HepG2 (cell line): ENCODE measurements at regions of chr16 and their contacts with region 1.

Region 1: GRCh38 chr16:22161999-22162655 is at the start of gene SDR42E2:
- DNase-seq: no peak
- ATAC-seq: peak; percentile 12; the same call in 2 of the 3 replicates
- H3K4me3 ChIP-seq: peak within 1 kb of the TSS in 1 of 3 experiments; percentile 37; a peak in 1 of 6 replicates
- H3K27ac ChIP-seq: no peak within 1 kb of the TSS
- H3K4me1 ChIP-seq: peaks cover 31% of the 10 kb centered on the region
- H3K27me3 ChIP-seq: peaks cover 6 to 24% of the 10 kb centered on the region in 2 experiments; a peak in 4 of 5 replicates
- CTCF ChIP-seq: no peak
- EP300 ChIP-seq: no peak
- POLR2A ChIP-seq: no peak
- RAD21 ChIP-seq: no peak
- total RNA-seq, gene SDR42E2: 0.11 TPM in 1 of 2 replicates, not detected in the other

Region 2: GRCh38 chr16:22109258-22109898 is 52.7 kb before region 1 on chr16:
- CTCF ChIA-PET with region 1: no interaction called
- POLR2A ChIA-PET with region 1: no interaction called
- in situ Hi-C with region 1: loop called (anchors 5 kb)
- intact Hi-C with region 1: no loop called
- DNase-seq: no peak
- ATAC-seq: no peak
- H3K4me3 ChIP-seq: no peak overlapping the region
- H3K27ac ChIP-seq: no peak overlapping the region
- H3K4me1 ChIP-seq: peaks cover 9% of the 10 kb centered on the region
- H3K27me3 ChIP-seq: peaks cover 7 to 37% of the 10 kb centered on the region in 2 experiments; a peak in 4 of 5 replicates
- CTCF ChIP-seq: no peak
- EP300 ChIP-seq: no peak
- POLR2A ChIP-seq: no peak
- RAD21 ChIP-seq: no peak

Region 3: DNA sequence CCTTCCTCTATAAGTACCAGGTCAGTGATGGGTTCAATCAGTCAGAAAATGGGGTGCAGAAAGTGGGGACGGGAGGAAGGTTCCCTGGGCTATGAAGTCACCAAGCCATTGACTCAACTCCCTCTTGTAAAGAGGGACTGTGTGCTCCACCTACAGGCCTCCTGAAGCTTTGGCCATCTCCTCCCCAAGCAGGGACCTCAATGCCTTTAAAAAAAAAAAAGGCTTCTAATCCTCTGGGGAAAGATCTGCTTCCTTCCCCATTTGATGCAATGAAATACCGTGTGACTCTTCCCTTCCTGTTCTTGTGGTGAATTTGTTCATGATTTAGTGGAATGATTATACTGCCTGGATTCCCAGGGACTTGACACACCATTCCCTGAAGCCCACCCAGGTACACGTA is 39.0 kb before region 1 on chr16:
- CTCF ChIA-PET with region 1: no interaction called
- POLR2A ChIA-PET with region 1: no interaction called
- in situ Hi-C with region 1: no loop called
- intact Hi-C with region 1: no loop called
- DNase-seq: no peak
- ATAC-seq: peak; percentile 75
- H3K4me3 ChIP-seq: no peak overlapping the region
- H3K27ac ChIP-seq: no peak overlapping the region
- H3K4me1 ChIP-seq: no peaks in the 10 kb centered on the region
- H3K27me3 ChIP-seq: peaks cover 7% of the 10 kb centered on the region in 2 experiments; a peak in 3 of 5 replicates
- CTCF ChIP-seq: 0 out of 2 replicates have a peak, but pooled peaks have one; percentile 39
- EP300 ChIP-seq: no peak
- POLR2A ChIP-seq: no peak
- RAD21 ChIP-seq: no peak